IMR-90 (cell line): ENCODE measurements at regions of chr3 and their contacts with region 1.

Region 1: DNA sequence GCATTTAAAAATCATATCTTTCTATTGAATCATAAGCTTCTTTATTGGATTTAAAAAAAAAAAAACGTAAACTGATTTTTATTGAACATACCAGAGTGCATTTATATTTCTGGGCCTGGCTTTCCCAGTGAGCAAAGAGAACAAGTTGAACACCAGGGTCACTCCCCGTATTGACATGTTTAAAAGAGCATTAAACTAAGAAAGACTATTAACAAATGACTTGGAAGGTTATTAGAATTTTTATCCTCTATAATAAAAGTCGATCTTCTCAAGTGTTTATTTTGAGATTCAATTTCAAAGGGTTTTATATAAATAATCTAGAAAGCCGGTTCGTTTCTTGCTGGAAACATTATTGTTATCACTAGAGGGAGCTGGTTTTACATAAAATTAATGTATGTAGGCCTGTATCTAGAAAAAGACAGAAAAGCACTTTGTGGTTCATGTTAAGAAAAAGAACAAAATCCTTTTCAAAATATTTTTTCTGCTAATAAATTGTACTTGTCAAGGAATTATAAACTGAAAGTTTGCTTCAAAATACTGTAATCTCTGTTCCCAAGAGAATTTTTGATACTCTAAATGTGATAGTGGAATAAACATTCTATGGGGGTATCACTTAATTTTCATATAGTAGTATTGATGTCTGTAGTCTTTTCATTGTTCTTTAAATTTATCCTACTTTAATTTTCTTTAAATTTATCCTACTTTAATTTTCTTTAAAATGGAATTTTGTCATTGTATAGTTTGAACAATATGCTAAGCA is 321.8 kb upstream of the MME start:
- DNase-seq: peak; percentile 70
- ATAC-seq: peak; percentile 66
- H3K4me3 ChIP-seq: no peak overlapping the region
- H3K27ac ChIP-seq: no peak overlapping the region
- H3K4me1 ChIP-seq: no peaks in the 10 kb centered on the region
- H3K27me3 ChIP-seq: no peaks in the 10 kb centered on the region
- CTCF ChIP-seq: peak; percentile 68
- POLR2A ChIP-seq: no peak
- RAD21 ChIP-seq: peak; percentile 77

Region 2: GRCh38 chr3:154904328-154904727 is 146.0 kb after region 1 on chr3:
- CTCF ChIA-PET with region 1: no interaction called
- POLR2A ChIA-PET with region 1: no interaction called
- dilution Hi-C with region 1: no loop called
- in situ Hi-C with region 1: no loop called
- intact Hi-C with region 1: loop called (anchors 5 kb)
- DNase-seq: peak; percentile 54
- ATAC-seq: peak; percentile 70; the same call in 1 of the 2 replicates
- H3K4me3 ChIP-seq: no peak overlapping the region
- H3K27ac ChIP-seq: no peak overlapping the region
- H3K4me1 ChIP-seq: peaks cover 3% of the 10 kb centered on the region; the same call in 1 of the 2 replicates
- H3K27me3 ChIP-seq: no peaks in the 10 kb centered on the region
- CTCF ChIP-seq: peak; percentile 58
- POLR2A ChIP-seq: no peak
- RAD21 ChIP-seq: peak; percentile 46

Region 3: DNA sequence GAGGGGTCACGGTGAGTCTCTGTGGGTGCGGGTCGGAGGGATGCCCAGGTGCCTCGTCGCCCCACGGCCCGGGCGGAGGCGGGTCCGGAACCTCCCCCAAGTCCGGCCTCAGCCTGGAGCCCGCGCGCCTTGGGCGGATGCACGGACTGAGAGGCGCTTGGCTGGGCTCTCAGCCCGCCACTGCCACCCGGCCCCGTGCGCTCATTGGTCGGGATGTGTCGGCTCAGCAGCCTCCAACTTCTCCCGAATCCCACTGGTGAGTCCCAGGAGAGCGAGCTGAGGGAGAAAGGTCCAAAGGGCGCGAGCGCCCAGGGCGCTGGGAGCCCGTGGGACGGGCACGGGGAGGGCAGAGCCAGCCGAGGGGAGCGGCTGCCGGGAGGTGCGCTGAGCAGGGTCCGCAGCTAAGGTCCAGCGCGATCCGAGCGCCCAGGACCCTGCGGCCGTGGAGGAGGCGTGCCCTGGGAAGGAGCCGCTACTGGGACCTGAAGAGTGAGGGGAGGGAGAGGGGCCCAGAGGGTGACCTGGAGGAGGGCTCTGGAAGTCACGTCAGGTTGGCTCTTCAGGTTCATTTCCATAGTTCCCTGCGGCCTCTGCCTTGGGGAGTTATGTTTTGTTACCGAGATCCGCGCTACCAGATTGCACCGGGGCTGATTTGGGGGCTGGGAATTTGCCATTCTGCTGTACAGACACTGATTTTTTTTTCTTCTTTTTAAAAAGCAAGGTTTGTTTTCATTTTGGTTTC is 321.6 kb after region 1 on chr3 and contains the start of gene MME:
- CTCF ChIA-PET with region 1: no interaction called
- POLR2A ChIA-PET with region 1: no interaction called
- dilution Hi-C with region 1: no loop called
- in situ Hi-C with region 1: no loop called
- intact Hi-C with region 1: loop called (anchors 2 kb)
- DNase-seq: peak; percentile 73
- ATAC-seq: peak; percentile 95
- H3K4me3 ChIP-seq: peak within 1 kb of the TSS; percentile 65
- H3K27ac ChIP-seq: peak within 1 kb of the TSS; percentile 30
- H3K4me1 ChIP-seq: 0 out of 2 replicates have a peak, but pooled peaks cover 2% of the 10 kb centered on the region
- H3K27me3 ChIP-seq: peaks cover 5% of the 10 kb centered on the region
- CTCF ChIP-seq: no peak
- POLR2A ChIP-seq: peak; percentile 28; the same call in 1 of the 2 replicates
- RAD21 ChIP-seq: no peak; the same call in 1 of the 2 replicates
- total RNA-seq, gene MME: 19.4 and 22.8 TPM in 2 replicates

Region 4: GRCh38 chr3:155323063-155323666 is 564.9 kb after region 1 on chr3:
- CTCF ChIA-PET with region 1: interaction called, 5 read pairs
- POLR2A ChIA-PET with region 1: no interaction called
- dilution Hi-C with region 1: no loop called
- in situ Hi-C with region 1: no loop called
- intact Hi-C with region 1: loop called (anchors 1 kb)
- DNase-seq: peak; percentile 89
- ATAC-seq: peak; percentile 91
- H3K4me3 ChIP-seq: no peak overlapping the region
- H3K27ac ChIP-seq: no peak overlapping the region
- H3K4me1 ChIP-seq: no peaks in the 10 kb centered on the region
- H3K27me3 ChIP-seq: no peaks in the 10 kb centered on the region
- CTCF ChIP-seq: peak; percentile 88
- POLR2A ChIP-seq: no peak; the same call in 1 of the 2 replicates
- RAD21 ChIP-seq: peak; percentile 95